Body of pancreas (tissue), 4 donors: ENCODE measurements at regions of chr17 and their contacts with region 1.

Region 1: DNA sequence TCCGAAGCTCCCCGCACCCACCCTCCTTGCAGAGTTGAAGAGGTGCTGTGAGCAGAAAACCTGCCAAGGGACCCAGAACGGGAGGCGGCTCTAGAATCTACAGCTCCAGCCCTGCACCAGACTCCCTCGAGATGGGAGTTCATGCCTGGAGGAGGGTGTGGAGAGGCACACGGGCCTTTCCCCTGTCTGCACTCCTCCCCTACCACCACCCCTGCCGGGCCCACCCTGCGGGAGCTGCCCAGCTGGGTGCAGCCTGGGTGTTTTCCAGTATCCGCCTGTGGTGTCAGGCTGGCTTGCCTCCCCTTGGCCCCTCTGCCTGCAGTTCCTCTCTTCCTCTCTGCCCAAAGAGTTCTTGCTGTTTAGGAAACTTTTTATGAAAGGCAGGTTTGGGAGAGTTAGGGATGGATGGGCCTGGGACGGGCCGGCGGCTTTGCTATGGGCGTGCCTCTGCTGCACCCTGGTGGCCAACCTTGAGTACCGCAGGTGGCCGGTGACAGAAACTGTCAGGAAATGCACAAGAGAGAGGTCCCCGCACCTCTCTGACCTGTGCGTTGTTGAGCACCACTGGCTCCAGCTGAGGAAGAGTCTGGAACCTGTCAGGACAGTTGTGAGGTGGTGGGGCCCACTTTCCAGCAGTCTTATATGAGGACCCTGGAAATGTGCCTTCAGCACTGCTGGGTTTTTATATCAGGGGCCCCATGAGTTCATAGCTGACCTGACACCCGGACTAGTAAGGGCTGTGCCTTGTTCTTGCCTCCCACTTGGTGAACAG is 354.1 kb downstream of the SEC14L1 start:
- DNase-seq: peak; percentile 80 to 84 (median 82)
- ATAC-seq: peak; percentile 80
- H3K4me3 ChIP-seq: no peak overlapping the region
- H3K27ac ChIP-seq: no peak overlapping the region
- H3K4me1 ChIP-seq: no peaks in the 10 kb centered on the region
- H3K27me3 ChIP-seq: no peaks in the 10 kb centered on the region
- CTCF ChIP-seq: peak; percentile 90 to 98 (median 96)
- POLR2A ChIP-seq: no peak

Region 2: GRCh38 chr17:77331301-77331864 is 163.5 kb before region 1 on chr17:
- intact Hi-C with region 1: loop called (anchors 5 kb)
- DNase-seq: peak; percentile 89 to 94 (median 92)
- ATAC-seq: peak; percentile 88
- H3K4me3 ChIP-seq: no peak overlapping the region
- H3K27ac ChIP-seq: peak overlapping the region in 2 of 4 donors; percentile 34 to 65
- H3K4me1 ChIP-seq: peaks cover 11% of the 10 kb centered on the region
- H3K27me3 ChIP-seq: no peaks in the 10 kb centered on the region
- CTCF ChIP-seq: peak; percentile 86 to 96 (median 92)
- POLR2A ChIP-seq: no peak